AG04450 (cell line): ENCODE measurements at regions of chr7 and their contacts with region 1.

Region 1: DNA sequence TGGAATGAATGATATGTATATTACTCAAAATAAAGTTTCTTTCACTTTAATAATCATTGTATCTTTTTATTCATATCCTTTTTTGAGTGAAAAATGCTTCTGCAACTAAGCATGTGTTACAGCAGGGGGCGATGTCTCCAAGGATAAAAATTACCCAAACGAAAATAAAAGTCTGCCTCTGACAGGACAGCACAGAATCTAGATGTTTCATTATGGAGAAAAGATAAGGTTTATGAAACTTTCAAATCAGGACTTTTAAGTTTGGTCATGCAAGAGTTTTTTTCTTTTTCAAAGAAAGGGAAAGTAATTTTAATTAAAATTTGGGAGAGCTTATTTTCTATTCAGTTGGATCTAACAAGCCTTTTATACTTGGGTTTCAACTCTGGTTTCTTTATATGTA is 48.4 kb downstream of the TES start:
- DNase-seq: no peak
- H3K4me3 ChIP-seq: no peak overlapping the region
- H3K27ac ChIP-seq: no peak overlapping the region
- H3K27me3 ChIP-seq: no peaks in the 10 kb centered on the region
- CTCF ChIP-seq: peak; percentile 76

Region 2: GRCh38 chr7:116180302-116180701 is 78.4 kb before region 1 on chr7:
- CTCF ChIA-PET with region 1: interaction called, 28 read pairs
- POLR2A ChIA-PET with region 1: no interaction called
- DNase-seq: no peak
- H3K4me3 ChIP-seq: no peak overlapping the region
- H3K27ac ChIP-seq: no peak overlapping the region
- H3K27me3 ChIP-seq: no peaks in the 10 kb centered on the region
- CTCF ChIP-seq: peak; percentile 83

Region 3: DNA sequence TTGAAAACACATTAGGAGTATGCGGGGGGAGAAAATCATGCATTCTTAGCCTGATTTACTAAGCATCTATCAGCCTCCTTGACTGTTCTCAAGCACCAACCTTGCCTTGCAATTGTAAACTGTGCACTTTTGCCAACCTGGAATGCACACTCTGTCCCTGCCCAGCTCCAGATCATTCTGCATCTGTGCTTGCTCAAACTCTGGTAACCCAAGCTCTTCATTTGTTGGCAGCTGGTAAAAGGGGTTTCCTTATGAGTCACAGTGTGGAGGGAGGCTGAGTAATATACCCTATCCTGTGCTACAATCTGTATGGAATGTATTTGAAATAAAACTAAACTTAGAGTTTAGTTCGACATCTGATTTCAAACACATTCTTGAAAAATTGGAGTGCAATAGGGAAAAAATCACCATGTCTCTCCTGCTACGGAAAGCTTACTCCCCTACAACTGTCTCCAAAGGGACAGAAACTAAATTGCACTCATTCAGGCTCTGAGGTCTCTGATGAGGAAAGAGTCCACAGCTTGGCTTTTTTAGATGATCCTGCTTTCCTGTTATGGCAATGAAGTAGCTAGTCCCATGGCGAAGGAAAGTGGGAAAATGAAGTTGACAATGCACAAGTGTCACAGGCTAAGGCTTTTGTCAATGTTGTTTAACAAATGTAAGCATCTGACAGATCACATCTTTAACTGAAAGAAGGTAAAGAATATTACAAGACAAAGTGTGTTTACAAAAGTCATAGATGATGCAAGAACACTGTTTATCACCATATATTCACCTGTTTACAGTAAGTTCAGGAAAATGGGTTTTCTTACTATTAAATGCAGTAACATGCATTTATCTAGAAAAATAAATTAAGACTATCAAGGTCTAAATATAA is 13.5 kb after region 1 on chr7:
- CTCF ChIA-PET with region 1: interaction called, 13 read pairs
- POLR2A ChIA-PET with region 1: interaction called, 12 read pairs
- DNase-seq: peak; percentile 93
- H3K4me3 ChIP-seq: peak overlapping the region; percentile 7; the same call in 1 of the 2 replicates
- H3K27ac ChIP-seq: peak overlapping the region; percentile 79
- H3K27me3 ChIP-seq: no peaks in the 10 kb centered on the region
- CTCF ChIP-seq: no peak

Region 4: GRCh38 chr7:116501425-116502167 is 242.9 kb after region 1 on chr7:
- CTCF ChIA-PET with region 1: interaction called, 10 read pairs
- POLR2A ChIA-PET with region 1: no interaction called
- DNase-seq: no peak
- H3K4me3 ChIP-seq: peak overlapping the region; percentile 89
- H3K27ac ChIP-seq: no peak overlapping the region
- H3K27me3 ChIP-seq: no peaks in the 10 kb centered on the region
- CTCF ChIP-seq: no peak

Region 5: DNA sequence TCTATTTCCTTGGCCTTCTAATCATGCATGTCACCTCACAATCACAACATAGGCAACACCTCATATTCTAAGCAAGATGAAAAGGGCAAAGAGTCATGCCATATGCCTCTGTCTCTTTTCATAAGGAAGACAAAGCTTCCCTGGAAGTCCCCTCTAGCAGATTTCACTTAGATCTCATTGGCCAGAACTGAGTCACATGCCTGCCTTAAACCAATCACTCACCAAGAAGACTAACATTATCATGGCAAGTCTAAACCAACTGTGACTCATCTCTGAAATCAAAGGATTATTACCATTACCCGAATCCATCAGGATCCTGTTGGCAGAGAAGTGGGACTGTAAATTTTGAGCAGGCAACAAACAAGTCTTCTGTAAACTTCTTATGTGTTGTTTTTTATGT is 293.9 kb after region 1 on chr7:
- CTCF ChIA-PET with region 1: interaction called, 11 read pairs
- POLR2A ChIA-PET with region 1: no interaction called
- DNase-seq: no peak
- H3K4me3 ChIP-seq: no peak overlapping the region
- H3K27ac ChIP-seq: no peak overlapping the region
- H3K27me3 ChIP-seq: no peaks in the 10 kb centered on the region
- CTCF ChIP-seq: no peak

Region 6: DNA sequence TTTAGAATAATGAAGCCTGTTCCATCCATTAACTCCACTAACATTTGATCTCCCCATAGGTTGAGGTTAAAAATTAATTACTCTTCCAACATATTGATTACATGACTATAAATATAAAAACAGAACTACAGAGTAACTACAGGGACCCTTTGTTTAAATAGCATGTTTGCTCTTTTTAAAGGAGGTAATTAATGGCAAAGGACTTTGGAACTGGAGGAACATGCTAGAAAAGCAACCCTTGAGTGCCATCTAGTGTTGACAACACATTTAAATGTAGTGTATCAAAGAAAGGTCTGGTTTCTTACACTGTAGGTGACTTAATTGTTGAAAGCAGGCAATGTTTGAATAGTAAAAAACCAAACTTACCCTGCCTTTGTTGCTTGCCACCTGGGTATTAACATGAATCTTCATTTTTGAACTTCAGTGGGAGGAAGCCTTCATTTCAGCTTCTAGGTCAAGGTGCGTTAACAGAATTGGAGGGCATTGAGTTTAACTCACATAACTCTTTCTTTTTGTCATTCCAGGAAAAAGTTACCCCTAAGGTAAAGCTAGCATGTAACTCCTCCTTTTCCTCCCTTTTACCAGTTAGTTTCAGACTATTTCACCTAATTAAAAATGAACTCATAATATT is 551.0 kb after region 1 on chr7:
- CTCF ChIA-PET with region 1: interaction called, 11 read pairs
- POLR2A ChIA-PET with region 1: no interaction called
- DNase-seq: peak; percentile 32
- H3K4me3 ChIP-seq: no peak overlapping the region
- H3K27ac ChIP-seq: no peak overlapping the region
- H3K27me3 ChIP-seq: no peaks in the 10 kb centered on the region
- CTCF ChIP-seq: peak; percentile 70